Right cardiac atrium (tissue), 5 donors: ENCODE measurements at regions of chr7 and their contacts with region 1.

Region 1: DNA sequence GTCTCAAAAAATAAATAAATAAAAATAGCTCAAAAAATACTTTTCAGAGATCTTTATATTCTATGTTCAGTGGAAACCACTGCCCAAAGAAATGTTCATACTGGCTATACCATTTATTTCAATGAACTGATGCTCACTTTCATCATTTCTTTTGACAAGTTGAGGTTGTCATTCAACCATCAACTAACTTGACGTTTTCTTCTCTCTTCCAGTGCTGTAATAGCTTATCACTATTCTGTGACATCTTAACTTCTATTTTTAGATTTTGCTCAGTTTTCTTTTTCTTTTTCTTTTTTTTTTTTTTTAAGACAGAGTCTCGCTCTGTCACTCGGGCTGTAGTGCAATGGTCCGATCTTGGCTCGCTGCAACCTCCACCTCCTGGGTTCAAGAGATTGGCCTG is 8.7 kb upstream of the CTAGE4 start:
- DNase-seq: no peak
- ATAC-seq: no peak
- H3K4me3 ChIP-seq: no peak overlapping the region
- H3K27ac ChIP-seq: no peak overlapping the region
- H3K4me1 ChIP-seq: no peaks in the 10 kb centered on the region
- H3K27me3 ChIP-seq: no peaks in the 10 kb centered on the region

Region 2: GRCh38 chr7:144027070-144027469 is 147.5 kb before region 1 on chr7:
- intact Hi-C with region 1: no loop called
- DNase-seq: no peak
- ATAC-seq: no peak
- H3K4me3 ChIP-seq: no peak overlapping the region
- H3K27ac ChIP-seq: no peak overlapping the region
- H3K4me1 ChIP-seq: no peaks in the 10 kb centered on the region
- H3K27me3 ChIP-seq: no peaks in the 10 kb centered on the region

Region 3: GRCh38 chr7:144391823-144392255 is 217.2 kb after region 1 on chr7:
- intact Hi-C with region 1: loop called in 1 of 4 experiments (anchors 10 kb)
- DNase-seq: no peak
- ATAC-seq: peak; percentile 81 to 82
- H3K4me3 ChIP-seq: no peak overlapping the region
- H3K27ac ChIP-seq: no peak overlapping the region
- H3K4me1 ChIP-seq: no peaks in the 10 kb centered on the region
- H3K27me3 ChIP-seq: no peaks in the 10 kb centered on the region